KBM-7 (cell line): ENCODE measurements at regions of chr19 and their contacts with region 1.

Region 1: GRCh38 chr19:39671738-39672363 is 16.1 kb downstream of the LGALS16 start:
- DNase-seq: peak; percentile 79

Region 2: GRCh38 chr19:39557441-39558151 is 114.3 kb before region 1 on chr19:
- in situ Hi-C with region 1: loop called (anchors 25 kb)
- DNase-seq: no peak

Region 3: DNA sequence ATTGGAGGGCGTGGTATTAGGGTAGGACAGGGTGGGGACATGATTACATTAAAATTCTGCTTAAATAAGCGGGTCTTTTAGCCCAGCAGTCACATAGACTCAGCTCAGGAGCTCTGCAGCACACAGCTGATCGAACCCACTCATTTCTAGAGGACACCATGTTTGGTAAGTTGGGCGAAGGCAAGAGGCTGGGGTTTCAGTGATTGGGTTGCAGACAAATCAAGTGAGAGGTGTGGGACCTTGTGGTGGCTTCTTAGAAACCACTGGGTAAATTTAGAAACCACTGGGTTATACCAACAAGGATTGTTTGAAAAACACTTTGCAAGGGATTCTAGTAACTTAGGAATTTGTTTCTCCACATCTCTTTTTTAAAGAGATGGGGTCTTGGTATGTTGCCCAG is 106.9 kb after region 1 on chr19 and contains the start of gene LEUTX:
- in situ Hi-C with region 1: no loop called
- DNase-seq: no peak